Activated naive CD4-positive, alpha-beta T cell treated with anti-CD3 and anti-CD28 coated beads for 36 hours (primary cell): ENCODE measurements at regions of chr6 and their contacts with region 1.

Region 1: GRCh38 chr6:168355716-168356449 is 36.3 kb upstream of the DACT2 start:
- DNase-seq: peak; percentile 25
- H3K4me3 Mint-ChIP-seq: no peak overlapping the region
- H3K27ac Mint-ChIP-seq: no peak overlapping the region
- H3K4me1 Mint-ChIP-seq: peaks cover under 1% of the 10 kb centered on the region
- H3K27me3 Mint-ChIP-seq: peaks cover 16% of the 10 kb centered on the region

Region 2: GRCh38 chr6:167907837-167908681 is 447.8 kb before region 1 on chr6:
- CTCF ChIA-PET with region 1: no interaction called
- intact Hi-C with region 1: loop called (anchors 5 kb)
- DNase-seq: peak; percentile 8
- H3K4me3 Mint-ChIP-seq: no peak overlapping the region
- H3K27ac Mint-ChIP-seq: no peak overlapping the region
- H3K4me1 Mint-ChIP-seq: no peaks in the 10 kb centered on the region
- H3K27me3 Mint-ChIP-seq: no peaks in the 10 kb centered on the region

Region 3: GRCh38 chr6:168388641-168389381 is 32.9 kb after region 1 on chr6:
- CTCF ChIA-PET with region 1: no interaction called
- intact Hi-C with region 1: no loop called
- DNase-seq: no peak
- H3K4me3 Mint-ChIP-seq: no peak overlapping the region
- H3K27ac Mint-ChIP-seq: no peak overlapping the region
- H3K4me1 Mint-ChIP-seq: no peaks in the 10 kb centered on the region
- H3K27me3 Mint-ChIP-seq: peaks cover 4% of the 10 kb centered on the region